ENCODE measurements at regions of chr7 and their contacts with region 1.

Region 1: GRCh38 chr7:130896898-130897514 is 163.0 kb upstream of the KLF14 start:
- DNase-seq: peak; percentile 71 to 80 (median 75)
- H3K4me3 ChIP-seq: no peak overlapping the region
- H3K4me3 Mint-ChIP-seq: peak overlapping the region in 7 of 8 donors; percentile 2 to 72 (median 35)
- H3K27ac ChIP-seq: peak overlapping the region; percentile 18
- H3K27ac Mint-ChIP-seq: peak overlapping the region; percentile 88 to 95 (median 94)
- H3K4me1 ChIP-seq: peaks cover 87% of the 10 kb centered on the region
- H3K4me1 Mint-ChIP-seq: peaks cover 64 to 97% (median 82%) of the 10 kb centered on the region in 4 donors
- H3K27me3 ChIP-seq: no peaks in the 10 kb centered on the region
- H3K27me3 Mint-ChIP-seq: no peaks in the 10 kb centered on the region

Region 2: GRCh38 chr7:130880668-130881067 is 16.3 kb before region 1 on chr7:
- CTCF ChIA-PET with region 1: interaction called, 58 read pairs
- POLR2A ChIA-PET with region 1: interaction called, 7 read pairs
- intact Hi-C with region 1: no loop called
- DNase-seq: no peak
- H3K4me3 ChIP-seq: no peak overlapping the region
- H3K4me3 Mint-ChIP-seq: peak overlapping the region in 1 of 8 donors; percentile 44
- H3K27ac ChIP-seq: no peak overlapping the region
- H3K27ac Mint-ChIP-seq: peak overlapping the region in 3 of 7 donors; percentile 47 to 78 (median 57)
- H3K4me1 ChIP-seq: peaks cover 15% of the 10 kb centered on the region
- H3K4me1 Mint-ChIP-seq: peaks cover 33 to 69% (median 58%) of the 10 kb centered on the region in 4 donors
- H3K27me3 ChIP-seq: no peaks in the 10 kb centered on the region
- H3K27me3 Mint-ChIP-seq: no peaks in the 10 kb centered on the region

Region 3: GRCh38 chr7:130941322-130942210 is 44.6 kb after region 1 on chr7:
- CTCF ChIA-PET with region 1: interaction called, 29 read pairs
- POLR2A ChIA-PET with region 1: interaction called, 3 read pairs
- intact Hi-C with region 1: no loop called
- DNase-seq: peak in 3 of 5 donors; percentile 44 to 73 (median 44)
- H3K4me3 ChIP-seq: peak overlapping the region; percentile 51 to 52
- H3K4me3 Mint-ChIP-seq: peak overlapping the region; percentile 89 to 97 (median 94)
- H3K27ac ChIP-seq: peak overlapping the region; percentile 77
- H3K27ac Mint-ChIP-seq: peak overlapping the region in 6 of 7 donors; percentile 93 to 99 (median 98)
- H3K4me1 ChIP-seq: peaks cover 97% of the 10 kb centered on the region
- H3K4me1 Mint-ChIP-seq: peaks cover 74 to 96% (median 86%) of the 10 kb centered on the region in 4 donors
- H3K27me3 ChIP-seq: no peaks in the 10 kb centered on the region
- H3K27me3 Mint-ChIP-seq: peaks cover 0 to 2% of the 10 kb centered on the region in 2 donors

Region 4: DNA sequence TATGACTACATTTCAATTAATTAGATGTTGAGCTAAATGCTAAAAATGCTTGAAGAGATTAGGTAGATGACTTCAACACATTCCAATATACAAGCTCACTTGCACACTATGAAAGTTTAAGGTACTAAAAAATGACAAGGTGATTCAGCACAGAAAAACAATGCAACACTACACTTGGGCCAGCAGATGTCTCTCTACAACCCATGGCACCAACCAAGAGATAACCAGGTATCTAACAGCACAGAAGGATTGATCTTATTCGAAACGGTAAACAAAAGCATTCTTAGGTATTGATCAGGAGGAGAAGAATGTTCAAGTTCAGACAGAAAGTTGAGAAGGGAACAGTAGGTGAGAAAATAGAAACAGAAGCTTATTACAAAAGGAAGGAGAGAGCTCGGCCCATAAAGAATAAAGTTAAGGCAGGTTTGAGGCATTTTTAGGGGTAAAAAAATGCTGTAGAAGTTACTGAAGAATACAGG is 85.2 kb after region 1 on chr7:
- CTCF ChIA-PET with region 1: interaction called, 69 read pairs
- POLR2A ChIA-PET with region 1: no interaction called
- intact Hi-C with region 1: no loop called
- DNase-seq: peak; percentile 62 to 70 (median 64)
- H3K4me3 ChIP-seq: no peak overlapping the region
- H3K4me3 Mint-ChIP-seq: no peak overlapping the region
- H3K27ac ChIP-seq: peak overlapping the region; percentile 50
- H3K27ac Mint-ChIP-seq: no peak overlapping the region
- H3K4me1 ChIP-seq: peaks cover 77% of the 10 kb centered on the region
- H3K4me1 Mint-ChIP-seq: peaks cover 24 to 48% (median 38%) of the 10 kb centered on the region in 4 donors
- H3K27me3 ChIP-seq: no peaks in the 10 kb centered on the region
- H3K27me3 Mint-ChIP-seq: no peaks in the 10 kb centered on the region

Region 5: DNA sequence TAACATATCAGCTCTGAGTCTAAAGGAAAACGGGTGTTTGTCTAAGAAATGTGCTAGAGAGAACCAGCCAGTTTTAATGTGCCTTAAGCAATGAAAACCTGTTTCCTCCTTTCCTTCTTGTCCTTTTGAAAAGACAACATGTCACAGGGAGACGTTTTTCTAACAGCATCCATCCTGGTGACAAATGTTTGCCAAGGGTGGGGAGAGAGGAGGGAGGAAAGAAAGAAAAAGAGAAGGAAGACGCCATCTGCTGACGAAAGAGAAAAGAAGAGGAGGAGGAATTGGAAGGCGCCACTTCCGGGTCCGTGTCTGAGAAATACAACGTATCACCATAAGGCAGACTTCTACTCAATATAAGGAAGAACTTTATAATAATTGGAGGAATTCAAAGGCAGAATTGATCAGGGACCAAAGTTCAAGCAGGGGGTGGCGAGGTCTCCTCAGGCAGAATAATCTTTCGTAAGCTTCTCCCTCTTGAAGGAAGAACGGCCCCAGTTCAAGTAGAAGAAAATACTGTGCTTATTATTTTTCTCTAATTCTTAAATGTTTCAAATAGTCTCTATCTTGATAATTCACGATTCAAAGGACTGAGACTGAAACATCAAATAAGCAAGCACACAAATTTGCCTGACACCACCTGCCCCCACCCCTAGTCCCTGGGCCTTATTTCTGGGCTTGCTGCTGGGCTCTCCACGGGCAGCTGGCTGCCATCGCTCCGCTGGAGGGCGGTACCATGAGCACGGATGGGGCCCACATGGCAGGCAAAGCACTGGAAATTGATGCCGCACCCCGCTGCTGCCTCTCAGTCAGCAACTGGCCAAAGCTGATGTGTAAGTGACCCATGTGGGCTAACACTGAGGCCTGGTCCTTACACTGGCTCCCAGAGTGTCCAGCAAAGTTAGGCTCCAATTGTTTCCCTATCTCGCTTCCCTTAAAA is 110.7 kb after region 1 on chr7:
- CTCF ChIA-PET with region 1: interaction called, 48 read pairs
- POLR2A ChIA-PET with region 1: no interaction called
- intact Hi-C with region 1: loop called (anchors 1 kb)
- DNase-seq: peak; percentile 65 to 75 (median 68)
- H3K4me3 ChIP-seq: peak overlapping the region in 1 of 2 donors; percentile 13
- H3K4me3 Mint-ChIP-seq: peak overlapping the region in 7 of 8 donors; percentile 13 to 86 (median 69)
- H3K27ac ChIP-seq: peak overlapping the region; percentile 57
- H3K27ac Mint-ChIP-seq: peak overlapping the region; percentile 84 to 99 (median 94)
- H3K4me1 ChIP-seq: peaks cover 86% of the 10 kb centered on the region
- H3K4me1 Mint-ChIP-seq: peaks cover 66 to 94% (median 82%) of the 10 kb centered on the region in 4 donors
- H3K27me3 ChIP-seq: no peaks in the 10 kb centered on the region
- H3K27me3 Mint-ChIP-seq: no peaks in the 10 kb centered on the region

Region 6: DNA sequence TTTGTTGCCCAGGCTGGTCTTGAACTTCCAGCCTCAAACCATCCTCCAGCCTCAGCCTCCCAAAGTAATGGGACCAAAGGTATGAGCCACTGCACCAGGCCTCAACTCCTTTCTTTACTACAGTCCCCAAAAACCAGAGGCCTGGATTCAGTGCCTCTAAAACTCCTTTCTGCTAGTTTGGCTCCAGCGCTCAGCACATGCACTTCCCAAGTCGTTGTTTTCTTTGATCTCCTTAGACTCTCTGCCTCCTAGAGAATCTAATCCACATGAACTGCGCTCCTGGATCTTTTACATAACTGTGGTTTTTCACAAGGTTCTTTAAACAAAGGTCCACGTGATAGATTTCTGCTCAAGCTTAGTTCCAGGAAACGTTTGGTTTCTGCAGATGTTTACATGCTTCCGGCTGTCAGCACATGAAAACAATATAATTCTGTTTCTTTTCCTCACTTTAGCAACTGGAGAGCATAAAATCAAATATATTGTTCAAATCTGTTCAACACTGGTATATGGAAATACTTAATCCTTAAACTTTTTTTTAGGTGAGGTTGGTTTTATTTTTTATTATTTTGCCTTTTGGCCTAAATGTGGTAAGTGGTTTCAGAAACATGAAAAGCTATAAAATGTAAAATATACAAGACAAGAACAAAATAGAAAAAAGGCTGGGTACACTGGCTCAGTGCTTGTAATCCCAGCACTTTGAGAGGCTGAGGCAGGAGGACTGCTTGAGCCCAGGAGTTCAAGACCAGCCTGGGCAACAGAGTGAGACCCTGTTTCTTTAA is 160.2 kb after region 1 on chr7:
- CTCF ChIA-PET with region 1: interaction called, 15 read pairs
- POLR2A ChIA-PET with region 1: interaction called, 6 read pairs
- intact Hi-C with region 1: no loop called
- DNase-seq: peak; percentile 58 to 79 (median 70)
- H3K4me3 ChIP-seq: no peak overlapping the region
- H3K4me3 Mint-ChIP-seq: peak overlapping the region; percentile 49 to 93 (median 81)
- H3K27ac ChIP-seq: peak overlapping the region; percentile 64
- H3K27ac Mint-ChIP-seq: peak overlapping the region; percentile 92 to 100 (median 97)
- H3K4me1 ChIP-seq: peaks cover 95% of the 10 kb centered on the region
- H3K4me1 Mint-ChIP-seq: peaks cover 53 to 87% (median 68%) of the 10 kb centered on the region in 4 donors
- H3K27me3 ChIP-seq: no peaks in the 10 kb centered on the region
- H3K27me3 Mint-ChIP-seq: no peaks in the 10 kb centered on the region

Region 7: GRCh38 chr7:131513245-131514061 is 616.4 kb after region 1 on chr7:
- CTCF ChIA-PET with region 1: no interaction called
- POLR2A ChIA-PET with region 1: no interaction called
- intact Hi-C with region 1: loop called (anchors 5 kb)
- DNase-seq: peak; percentile 61 to 70 (median 63)
- H3K4me3 ChIP-seq: no peak overlapping the region
- H3K4me3 Mint-ChIP-seq: peak overlapping the region in 4 of 8 donors; percentile 32 to 63 (median 57)
- H3K27ac ChIP-seq: no peak overlapping the region
- H3K27ac Mint-ChIP-seq: peak overlapping the region in 2 of 7 donors; percentile 43 to 68
- H3K4me1 ChIP-seq: peaks cover 6% of the 10 kb centered on the region
- H3K4me1 Mint-ChIP-seq: peaks cover 12 to 17% (median 15%) of the 10 kb centered on the region in 4 donors
- H3K27me3 ChIP-seq: no peaks in the 10 kb centered on the region
- H3K27me3 Mint-ChIP-seq: peaks cover 0 to 4% of the 10 kb centered on the region in 2 donors